Calu3 (cell line): ENCODE measurements at regions of chr19 and their contacts with region 1.

Region 1: DNA sequence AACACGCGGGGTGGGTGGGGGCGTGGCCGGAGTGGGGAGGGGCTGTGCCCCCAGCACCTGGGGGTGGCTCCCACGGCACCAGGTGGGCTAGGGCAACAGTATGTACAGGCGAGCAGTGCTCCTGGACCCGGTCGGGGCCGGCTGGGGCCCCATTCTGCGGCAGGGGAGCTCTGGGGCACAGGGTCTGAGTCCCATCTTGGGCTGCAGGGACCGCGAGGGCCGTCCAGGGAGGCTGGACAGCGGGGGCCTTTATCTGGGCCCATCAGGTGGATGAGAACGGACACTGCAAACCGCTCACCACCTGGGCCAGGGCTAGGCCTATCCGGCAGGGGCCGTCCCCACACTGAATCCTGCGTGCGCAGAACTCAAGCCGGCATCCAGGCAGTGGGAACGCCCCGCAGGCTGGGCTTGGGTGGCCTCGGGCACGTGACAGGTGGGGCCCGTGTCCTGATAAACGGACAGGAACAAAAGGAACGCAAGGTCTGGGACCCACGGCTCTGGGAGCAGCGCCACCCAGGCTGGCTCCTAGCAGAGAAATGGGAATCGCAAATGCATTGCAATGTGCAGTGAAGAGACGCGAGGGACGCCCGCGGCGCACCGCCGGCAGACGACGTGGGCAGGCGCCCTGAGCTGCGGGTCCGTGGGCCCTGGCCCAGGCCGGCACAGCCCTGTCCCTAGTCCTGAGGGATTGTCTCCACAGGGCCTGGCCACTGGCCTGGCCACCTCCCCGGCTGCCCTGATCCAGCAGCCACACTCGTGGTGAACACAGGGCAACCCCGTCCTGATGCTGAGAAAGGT is 29.8 kb downstream of the BTBD2 start:
- DNase-seq: no peak
- H3K4me3 Mint-ChIP-seq: no peak overlapping the region
- H3K27ac Mint-ChIP-seq: no peak overlapping the region
- H3K4me1 Mint-ChIP-seq: no peaks in the 10 kb centered on the region
- H3K27me3 Mint-ChIP-seq: no peaks in the 10 kb centered on the region
- CTCF ChIP-seq: no peak

Region 2: GRCh38 chr19:1945899-1946298 is 39.9 kb before region 1 on chr19:
- CTCF ChIA-PET with region 1: no interaction called
- intact Hi-C with region 1: no loop called
- DNase-seq: no peak
- H3K4me3 Mint-ChIP-seq: no peak overlapping the region
- H3K27ac Mint-ChIP-seq: peak overlapping the region; percentile 63
- H3K4me1 Mint-ChIP-seq: no peaks in the 10 kb centered on the region
- H3K27me3 Mint-ChIP-seq: no peaks in the 10 kb centered on the region
- CTCF ChIP-seq: peak; percentile 31

Region 3: DNA sequence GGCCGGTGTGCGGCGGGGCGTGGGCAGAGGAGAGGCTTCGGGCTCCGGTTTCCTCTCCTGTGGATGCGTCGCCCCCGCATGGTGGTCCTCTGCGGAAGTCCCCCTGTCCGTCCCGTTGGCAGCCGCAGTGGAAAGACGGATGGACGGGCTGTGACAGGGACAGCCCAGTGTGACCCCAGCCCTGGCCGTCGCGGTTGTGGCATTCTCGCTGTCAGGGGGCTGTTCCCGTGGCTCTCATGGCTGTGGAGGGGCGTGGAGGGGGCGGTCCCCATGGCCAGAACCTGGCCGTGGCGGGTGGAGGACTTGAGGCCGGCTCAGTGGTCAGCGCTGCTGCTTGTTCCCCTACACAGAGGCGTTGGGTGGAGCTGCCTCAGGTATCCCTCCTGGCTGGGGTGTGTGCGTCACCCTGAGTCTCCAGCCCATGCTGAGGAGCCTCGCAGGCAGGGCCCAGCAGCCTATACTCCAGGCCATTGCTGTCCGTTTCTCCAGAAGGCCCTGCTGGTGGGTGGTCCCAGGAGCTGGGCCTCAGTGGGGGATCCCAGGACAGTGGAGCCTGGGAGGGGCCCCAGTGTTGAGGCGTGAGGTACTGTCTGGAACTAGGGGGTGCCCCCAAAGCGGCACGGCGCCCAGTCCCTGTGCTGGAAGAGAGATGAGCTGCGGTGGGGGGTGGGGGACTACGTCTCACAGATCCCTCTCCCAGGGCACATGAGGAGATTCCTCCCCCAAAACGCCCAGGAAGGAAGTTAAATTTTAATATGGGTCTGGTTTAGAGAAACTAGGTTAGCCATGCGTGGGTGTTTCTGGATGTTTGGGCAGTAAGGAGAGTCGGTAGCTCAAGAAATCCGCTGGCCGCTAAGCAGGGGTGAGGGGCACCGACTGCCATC is 24.5 kb before region 1 on chr19:
- CTCF ChIA-PET with region 1: no interaction called
- intact Hi-C with region 1: no loop called
- DNase-seq: no peak
- H3K4me3 Mint-ChIP-seq: no peak overlapping the region
- H3K27ac Mint-ChIP-seq: no peak overlapping the region
- H3K4me1 Mint-ChIP-seq: no peaks in the 10 kb centered on the region
- H3K27me3 Mint-ChIP-seq: no peaks in the 10 kb centered on the region
- CTCF ChIP-seq: no peak

Region 4: DNA sequence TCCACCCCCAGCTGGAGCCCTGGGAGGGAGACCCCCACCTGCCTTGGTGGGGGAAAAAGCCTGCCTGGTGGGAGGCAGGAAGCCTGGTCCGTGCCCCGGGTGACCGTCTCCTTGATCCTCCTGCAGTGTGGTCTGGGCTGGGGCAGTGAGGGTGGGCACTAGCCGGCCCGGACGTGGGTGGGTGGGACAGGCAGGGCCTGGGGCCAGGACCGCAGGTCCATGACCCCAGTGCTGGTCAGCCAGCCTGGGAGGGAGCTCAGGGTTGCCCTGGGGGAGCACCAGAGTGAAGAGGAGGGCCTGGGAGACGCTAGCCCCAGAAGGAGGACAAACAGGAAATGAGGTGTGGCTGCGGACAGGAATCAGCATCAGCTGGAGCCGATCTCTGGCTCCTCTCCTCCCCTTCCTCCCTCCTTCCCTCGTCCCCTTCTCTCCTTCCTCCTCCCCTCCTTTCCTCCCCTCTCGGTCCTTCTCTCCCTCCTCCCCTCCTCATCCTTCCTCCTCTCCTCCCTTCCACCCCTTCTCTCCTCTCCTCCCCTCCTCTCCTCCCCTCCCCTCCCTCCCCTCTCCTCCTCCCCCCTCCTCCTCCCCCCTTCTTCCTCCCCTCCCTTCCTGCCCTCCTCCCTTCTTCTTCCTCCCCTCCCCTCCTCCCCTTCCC is 70.6 kb after region 1 on chr19:
- CTCF ChIA-PET with region 1: interaction called, 14 read pairs
- intact Hi-C with region 1: no loop called
- DNase-seq: no peak
- H3K4me3 Mint-ChIP-seq: no peak overlapping the region
- H3K27ac Mint-ChIP-seq: no peak overlapping the region
- H3K4me1 Mint-ChIP-seq: no peaks in the 10 kb centered on the region
- H3K27me3 Mint-ChIP-seq: no peaks in the 10 kb centered on the region
- CTCF ChIP-seq: no peak